Activated B cell treated with CpG ODN at 0.5 μM for 24 hours (primary cell): ENCODE measurements at regions of chr3 and their contacts with region 1.

Region 1: DNA sequence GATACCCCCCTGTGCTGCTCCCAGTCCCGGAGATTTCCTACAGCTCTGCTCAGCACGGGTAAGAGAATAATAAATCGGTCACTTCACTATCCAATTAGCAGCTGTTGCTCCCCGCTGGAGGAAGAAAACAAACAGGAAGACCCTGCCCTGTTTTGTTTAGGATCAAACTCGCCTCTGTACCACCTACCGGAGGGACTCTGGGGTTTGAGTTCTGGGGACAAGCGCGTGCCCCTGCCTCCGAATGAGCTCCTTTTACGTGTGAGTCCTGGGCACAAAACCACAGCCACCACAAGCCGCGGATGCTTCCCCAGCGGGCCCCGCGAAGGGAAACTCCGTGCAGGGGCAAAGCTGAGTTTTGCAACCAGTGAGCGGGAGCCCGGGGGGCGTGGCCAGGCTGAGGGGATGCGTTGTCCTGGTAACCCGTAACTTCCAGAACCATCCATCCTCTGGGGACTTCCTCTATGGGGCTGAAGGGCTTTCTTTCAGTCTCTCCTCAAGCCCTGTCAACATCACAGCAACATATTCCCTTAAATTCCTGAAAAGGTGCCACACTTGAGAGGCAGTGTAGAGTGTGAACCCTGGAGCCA is 315.7 kb upstream of the PROK2 start:
- DNase-seq: peak; percentile 91
- ATAC-seq: peak; percentile 60
- H3K4me3 Mint-ChIP-seq: peak overlapping the region; percentile 83
- H3K27ac Mint-ChIP-seq: peak overlapping the region; percentile 84
- H3K4me1 Mint-ChIP-seq: peaks cover 73% of the 10 kb centered on the region
- H3K27me3 Mint-ChIP-seq: no peaks in the 10 kb centered on the region
- CTCF ChIP-seq: no peak

Region 2: DNA sequence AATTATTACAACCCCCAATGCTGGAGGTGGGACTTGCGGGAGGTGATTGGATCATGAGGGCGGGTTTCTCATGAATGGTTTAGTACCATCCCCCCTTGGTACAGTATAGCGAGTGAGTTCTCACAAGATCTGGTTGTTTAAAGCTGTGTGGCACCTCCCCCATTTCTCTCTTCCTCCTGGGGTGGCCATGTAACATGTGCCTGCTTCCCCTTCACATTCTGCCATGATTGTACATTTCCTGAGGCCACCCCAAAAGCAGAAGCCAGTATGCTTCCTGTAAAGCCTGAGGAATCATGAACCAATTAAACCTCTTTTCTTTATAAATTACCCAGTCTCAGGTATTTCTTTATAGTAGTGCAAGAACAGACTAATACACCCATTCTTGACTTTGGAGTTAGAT is 295.5 kb before region 1 on chr3:
- CTCF ChIA-PET with region 1: no interaction called
- POLR2A ChIA-PET with region 1: no interaction called
- intact Hi-C with region 1: no loop called
- DNase-seq: no peak
- ATAC-seq: no peak
- H3K4me3 Mint-ChIP-seq: no peak overlapping the region
- H3K27ac Mint-ChIP-seq: no peak overlapping the region
- H3K4me1 Mint-ChIP-seq: no peaks in the 10 kb centered on the region
- H3K27me3 Mint-ChIP-seq: peaks cover 18% of the 10 kb centered on the region
- CTCF ChIP-seq: no peak

Region 3: DNA sequence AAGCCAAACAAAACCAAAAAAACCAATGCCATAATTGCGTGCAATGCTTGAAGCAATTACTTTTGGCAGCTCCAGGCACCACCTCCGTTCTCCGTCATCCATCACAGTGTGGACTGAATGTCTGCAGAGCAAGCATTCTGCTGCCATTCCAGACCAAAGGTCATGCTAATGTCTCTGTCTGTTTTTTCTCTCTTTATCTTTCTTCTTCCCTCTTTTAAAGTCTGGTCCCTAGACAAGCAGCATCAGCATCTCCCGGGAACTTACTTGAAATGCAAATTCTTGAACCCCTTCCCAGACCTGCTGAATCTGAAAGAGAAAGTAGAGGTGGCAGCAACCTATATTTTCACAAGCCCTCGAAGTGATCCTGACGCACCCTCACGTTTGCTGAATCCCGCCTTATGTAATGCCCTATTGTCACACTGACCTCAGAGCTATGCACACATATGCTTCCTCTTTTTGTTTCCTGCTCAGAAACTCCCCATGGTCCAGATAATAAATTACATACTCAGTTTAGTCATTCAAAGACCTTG is 18.4 kb before region 1 on chr3:
- CTCF ChIA-PET with region 1: interaction called, 3 read pairs
- POLR2A ChIA-PET with region 1: interaction called, 13 read pairs
- intact Hi-C with region 1: loop called (anchors 1 kb)
- DNase-seq: no peak
- ATAC-seq: peak; percentile 81
- H3K4me3 Mint-ChIP-seq: peak overlapping the region; percentile 72
- H3K27ac Mint-ChIP-seq: peak overlapping the region; percentile 71
- H3K4me1 Mint-ChIP-seq: peaks cover 71% of the 10 kb centered on the region
- H3K27me3 Mint-ChIP-seq: peaks cover 12% of the 10 kb centered on the region
- CTCF ChIP-seq: no peak

Region 4: DNA sequence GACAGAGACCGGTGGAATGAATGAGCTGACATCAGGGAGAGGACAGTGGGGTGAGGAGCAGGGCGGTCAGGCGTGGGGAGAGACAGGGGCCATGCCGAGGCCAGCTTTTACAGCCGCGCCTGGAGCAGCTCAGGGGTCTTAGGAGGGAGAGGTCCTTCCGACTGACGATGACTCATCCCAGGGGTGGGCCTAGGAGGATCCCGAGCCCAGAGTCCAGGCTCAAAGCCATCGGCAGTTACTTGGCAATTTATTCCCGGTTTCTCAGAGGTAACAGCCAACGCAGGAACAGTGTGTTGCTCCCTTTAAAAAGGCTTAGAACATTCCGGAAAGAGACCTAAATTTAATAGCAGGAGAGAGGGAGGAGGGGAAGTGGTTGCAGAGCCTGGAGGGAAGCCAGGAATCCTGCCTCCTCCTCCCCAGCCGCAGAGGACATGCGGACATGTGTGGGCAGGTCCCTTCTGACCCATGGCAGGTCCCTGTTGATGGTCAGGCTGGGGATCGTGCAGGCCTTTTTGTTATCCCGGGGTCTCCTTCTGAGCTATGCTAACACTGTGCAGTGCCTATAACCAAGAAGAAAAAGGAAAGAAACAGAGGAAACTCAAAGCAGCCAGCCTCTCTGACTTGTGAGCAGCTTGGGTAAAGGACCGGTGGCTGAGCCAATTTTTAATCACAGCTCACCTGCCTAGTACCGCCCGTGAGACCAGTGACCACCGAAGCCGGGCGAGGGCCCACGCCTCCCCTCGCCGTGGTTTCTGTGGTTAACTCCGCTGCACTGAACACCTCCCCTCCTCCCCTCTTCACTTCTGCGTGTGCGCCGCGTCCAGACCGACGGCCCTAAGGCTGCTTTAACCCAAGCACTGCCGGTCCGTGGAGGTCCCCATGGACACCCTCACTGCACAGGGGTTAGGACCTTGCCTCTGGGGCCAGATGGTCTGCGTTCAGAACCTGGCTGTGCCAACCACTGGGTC is 76.7 kb after region 1 on chr3:
- CTCF ChIA-PET with region 1: interaction called, 3 read pairs
- POLR2A ChIA-PET with region 1: interaction called, 8 read pairs
- intact Hi-C with region 1: loop called (anchors 1 kb)
- DNase-seq: peak; percentile 35
- ATAC-seq: peak; percentile 20
- H3K4me3 Mint-ChIP-seq: peak overlapping the region; percentile 79
- H3K27ac Mint-ChIP-seq: peak overlapping the region; percentile 75
- H3K4me1 Mint-ChIP-seq: peaks cover 64% of the 10 kb centered on the region
- H3K27me3 Mint-ChIP-seq: peaks cover 2% of the 10 kb centered on the region
- CTCF ChIP-seq: no peak

Region 5: DNA sequence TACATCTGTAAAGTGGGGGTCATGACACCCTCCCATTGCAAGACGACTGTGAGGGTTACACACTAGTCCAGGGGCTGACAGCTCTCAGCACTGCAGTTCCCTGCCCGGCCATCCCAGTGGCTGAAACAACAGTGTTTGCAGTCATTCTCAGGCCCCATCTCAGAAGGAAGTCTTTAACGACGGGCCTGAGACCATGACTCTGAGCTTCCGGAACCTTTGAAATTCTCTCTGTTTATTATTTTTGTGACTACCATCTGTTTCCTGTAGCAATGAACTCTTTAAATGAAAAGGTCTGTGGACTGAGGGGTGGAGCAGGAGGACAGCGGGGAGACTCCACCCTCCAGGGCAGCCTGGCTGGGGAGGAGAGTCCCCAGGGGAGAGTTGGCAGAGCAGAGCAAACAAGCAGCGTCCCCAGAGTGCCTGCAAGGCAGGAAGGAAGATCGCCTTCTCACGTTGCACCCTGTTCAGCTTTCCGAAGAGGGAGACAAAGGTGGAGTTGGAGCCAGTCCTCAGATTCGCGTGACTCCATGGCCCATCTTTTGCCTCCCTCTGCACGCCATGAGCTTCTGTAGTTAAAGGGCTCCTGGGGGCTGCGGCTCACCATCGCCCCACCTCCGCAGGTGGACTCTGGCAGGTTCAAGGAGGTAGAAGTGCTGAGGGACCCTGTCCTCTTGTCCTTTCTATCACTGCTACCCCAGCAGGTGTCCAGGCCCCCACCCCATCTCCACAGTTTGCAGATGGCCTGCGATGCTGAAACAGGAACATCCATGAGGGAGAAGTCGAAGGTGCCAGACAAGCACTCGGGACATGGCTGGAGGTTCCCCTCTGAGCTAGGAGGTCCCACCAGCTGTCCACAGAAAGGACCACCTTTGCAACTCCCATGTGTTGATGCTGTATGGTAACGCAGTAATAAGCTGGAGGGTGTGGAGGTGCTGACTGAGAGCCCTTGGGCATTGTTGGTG is 210.0 kb after region 1 on chr3:
- CTCF ChIA-PET with region 1: no interaction called
- POLR2A ChIA-PET with region 1: interaction called, 5 read pairs
- intact Hi-C with region 1: loop called (anchors 2 kb)
- DNase-seq: peak; percentile 45
- ATAC-seq: peak; percentile 98
- H3K4me3 Mint-ChIP-seq: peak overlapping the region; percentile 74
- H3K27ac Mint-ChIP-seq: peak overlapping the region; percentile 76
- H3K4me1 Mint-ChIP-seq: peaks cover 47% of the 10 kb centered on the region
- H3K27me3 Mint-ChIP-seq: no peaks in the 10 kb centered on the region
- CTCF ChIP-seq: no peak

Region 6: GRCh38 chr3:72708441-72708840 is 607.7 kb after region 1 on chr3:
- CTCF ChIA-PET with region 1: no interaction called
- POLR2A ChIA-PET with region 1: no interaction called
- intact Hi-C with region 1: no loop called
- DNase-seq: no peak
- ATAC-seq: no peak
- H3K4me3 Mint-ChIP-seq: no peak overlapping the region
- H3K27ac Mint-ChIP-seq: no peak overlapping the region
- H3K4me1 Mint-ChIP-seq: no peaks in the 10 kb centered on the region
- H3K27me3 Mint-ChIP-seq: peaks cover 3% of the 10 kb centered on the region
- CTCF ChIP-seq: no peak

Region 7: GRCh38 chr3:72756900-72757299 is 656.2 kb after region 1 on chr3:
- CTCF ChIA-PET with region 1: no interaction called
- POLR2A ChIA-PET with region 1: no interaction called
- intact Hi-C with region 1: loop called (anchors 2 kb)
- DNase-seq: no peak
- ATAC-seq: peak; percentile 99
- H3K4me3 Mint-ChIP-seq: peak overlapping the region; percentile 67
- H3K27ac Mint-ChIP-seq: no peak overlapping the region
- H3K4me1 Mint-ChIP-seq: peaks cover 32% of the 10 kb centered on the region
- H3K27me3 Mint-ChIP-seq: peaks cover 33% of the 10 kb centered on the region
- CTCF ChIP-seq: no peak